Right cardiac atrium (tissue), 5 donors: ENCODE measurements at regions of chr11 and their contacts with region 1.

Region 1: DNA sequence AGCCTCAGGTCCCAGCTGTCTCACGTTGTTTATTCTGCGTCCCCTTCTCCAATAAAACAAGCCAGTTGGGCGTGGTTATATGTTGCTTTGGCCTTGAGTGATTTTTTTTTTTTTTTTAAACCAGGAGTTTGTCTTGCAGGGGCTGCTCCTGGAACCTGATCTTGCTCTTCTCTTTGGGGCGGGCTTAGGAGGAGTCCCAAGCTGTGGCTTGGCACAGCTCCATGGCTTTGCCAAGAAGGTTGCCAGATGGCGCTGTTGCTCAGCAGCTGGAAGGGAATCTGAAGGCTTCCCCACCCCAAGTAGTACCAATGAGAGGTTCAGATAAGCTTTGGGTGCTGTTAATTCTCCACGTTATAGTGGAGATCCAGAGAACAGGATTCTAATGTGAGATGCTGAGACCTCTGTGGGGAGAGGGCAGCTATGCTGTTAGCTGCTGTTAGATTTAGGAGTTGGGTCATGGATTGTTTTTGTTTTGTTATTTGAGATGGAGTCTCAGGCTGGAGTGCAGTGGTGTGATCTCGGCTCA is 2.0 kb upstream of the FERMT3 start:
- DNase-seq: peak; percentile 88 to 94 (median 92)
- ATAC-seq: peak; percentile 49 to 51
- H3K4me3 ChIP-seq: no peak overlapping the region
- H3K27ac ChIP-seq: no peak overlapping the region
- H3K4me1 ChIP-seq: no peaks in the 10 kb centered on the region
- H3K27me3 ChIP-seq: no peaks in the 10 kb centered on the region

Region 2: DNA sequence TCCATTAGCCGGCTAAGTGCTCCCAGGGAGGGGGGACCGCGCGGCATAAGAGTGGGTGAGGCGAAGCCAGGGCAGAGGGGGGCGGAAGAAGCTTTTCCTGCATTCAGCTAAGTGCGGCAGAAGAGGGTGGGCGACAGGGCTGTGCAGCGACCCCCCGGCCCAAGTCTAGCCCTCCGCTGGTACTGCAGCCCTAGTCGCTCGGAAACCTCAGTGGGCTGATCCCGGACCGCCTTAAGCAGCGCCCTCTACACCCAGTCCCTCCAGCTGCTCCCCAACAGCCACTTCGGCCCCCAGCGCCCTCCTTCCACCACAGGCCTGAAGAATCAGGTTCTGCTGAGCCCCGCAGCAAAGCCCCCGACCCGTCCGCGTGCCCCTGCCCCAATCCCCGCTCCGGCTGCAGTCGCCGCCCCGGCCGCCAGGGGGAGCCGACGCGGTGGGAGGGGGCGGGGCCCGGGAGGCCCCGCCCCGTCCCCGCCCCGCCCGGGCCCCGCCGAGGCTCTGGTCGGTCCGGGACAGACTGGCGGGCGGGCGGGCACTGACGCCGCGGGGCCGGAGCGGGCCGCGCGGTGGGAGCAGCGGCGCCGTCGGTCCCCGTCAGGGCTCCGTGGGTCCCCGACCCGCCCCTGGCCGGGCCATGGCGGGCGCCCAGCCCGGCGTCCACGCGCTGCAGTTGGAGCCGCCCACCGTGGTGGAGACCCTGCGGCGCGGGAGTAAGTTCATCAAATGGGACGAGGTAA is 46.7 kb after region 1 on chr11 and contains the start of gene PLCB3:
- intact Hi-C with region 1: loop called in 1 of 4 experiments (anchors 2 kb)
- DNase-seq: peak; percentile 57 to 86 (median 85)
- ATAC-seq: peak; percentile 44 to 59
- H3K4me3 ChIP-seq: peak within 1 kb of the TSS; percentile 83
- H3K27ac ChIP-seq: peak within 1 kb of the TSS; percentile 27
- H3K4me1 ChIP-seq: no peaks in the 10 kb centered on the region
- H3K27me3 ChIP-seq: no peaks in the 10 kb centered on the region
- total RNA-seq, gene PLCB3: 10.9 to 14.2 (median 13.7) TPM

Region 3: GRCh38 chr11:64458997-64459396 is 254.5 kb after region 1 on chr11:
- intact Hi-C with region 1: no loop called
- DNase-seq: no peak
- ATAC-seq: no peak
- H3K4me3 ChIP-seq: no peak overlapping the region
- H3K27ac ChIP-seq: no peak overlapping the region
- H3K4me1 ChIP-seq: no peaks in the 10 kb centered on the region
- H3K27me3 ChIP-seq: no peaks in the 10 kb centered on the region

Region 4: DNA sequence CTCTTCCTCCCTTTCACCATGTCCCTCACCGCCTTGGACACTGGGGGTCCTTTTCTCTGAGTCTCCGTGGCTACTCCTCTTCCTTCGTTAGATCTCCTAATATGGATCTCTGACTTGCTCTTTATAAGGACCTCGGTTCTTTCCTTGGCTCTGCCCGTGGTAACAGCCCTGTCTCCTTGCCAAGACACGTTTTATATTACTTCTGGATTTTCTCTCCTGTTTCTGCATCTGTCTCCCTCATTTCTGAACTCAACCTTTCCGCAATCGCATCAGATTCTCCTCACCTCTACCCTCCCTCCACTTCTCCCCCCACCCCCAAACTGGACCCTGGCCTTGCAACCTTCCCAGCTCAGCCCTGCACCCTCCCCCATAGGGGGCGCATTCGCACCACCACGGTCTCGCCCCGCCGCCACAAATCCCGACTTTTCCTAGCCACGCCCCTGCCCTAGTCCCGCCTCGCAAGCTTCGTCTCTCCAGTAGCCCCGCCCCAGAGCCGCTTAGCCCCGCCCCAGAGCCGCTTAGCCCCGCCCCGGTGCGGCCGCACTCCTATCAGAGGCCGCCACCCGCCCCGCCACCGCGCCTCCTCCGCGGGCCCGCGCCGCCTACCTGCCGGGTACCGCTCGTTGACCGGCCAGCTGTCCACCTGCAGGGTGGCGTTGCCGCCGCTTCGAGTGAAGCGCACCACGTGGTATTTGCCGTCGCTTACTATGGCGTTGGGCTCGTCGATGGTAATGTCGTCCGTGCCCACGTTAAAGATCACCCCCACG is 425.5 kb after region 1 on chr11:
- intact Hi-C with region 1: no loop called
- DNase-seq: peak in 1 of 3 donors; percentile 74
- ATAC-seq: peak in 1 of 2 donors; percentile 55
- H3K4me3 ChIP-seq: no peak overlapping the region
- H3K27ac ChIP-seq: no peak overlapping the region
- H3K4me1 ChIP-seq: no peaks in the 10 kb centered on the region
- H3K27me3 ChIP-seq: no peaks in the 10 kb centered on the region